ENCODE measurements at regions of chr16 and their contacts with region 1.

Region 1: DNA sequence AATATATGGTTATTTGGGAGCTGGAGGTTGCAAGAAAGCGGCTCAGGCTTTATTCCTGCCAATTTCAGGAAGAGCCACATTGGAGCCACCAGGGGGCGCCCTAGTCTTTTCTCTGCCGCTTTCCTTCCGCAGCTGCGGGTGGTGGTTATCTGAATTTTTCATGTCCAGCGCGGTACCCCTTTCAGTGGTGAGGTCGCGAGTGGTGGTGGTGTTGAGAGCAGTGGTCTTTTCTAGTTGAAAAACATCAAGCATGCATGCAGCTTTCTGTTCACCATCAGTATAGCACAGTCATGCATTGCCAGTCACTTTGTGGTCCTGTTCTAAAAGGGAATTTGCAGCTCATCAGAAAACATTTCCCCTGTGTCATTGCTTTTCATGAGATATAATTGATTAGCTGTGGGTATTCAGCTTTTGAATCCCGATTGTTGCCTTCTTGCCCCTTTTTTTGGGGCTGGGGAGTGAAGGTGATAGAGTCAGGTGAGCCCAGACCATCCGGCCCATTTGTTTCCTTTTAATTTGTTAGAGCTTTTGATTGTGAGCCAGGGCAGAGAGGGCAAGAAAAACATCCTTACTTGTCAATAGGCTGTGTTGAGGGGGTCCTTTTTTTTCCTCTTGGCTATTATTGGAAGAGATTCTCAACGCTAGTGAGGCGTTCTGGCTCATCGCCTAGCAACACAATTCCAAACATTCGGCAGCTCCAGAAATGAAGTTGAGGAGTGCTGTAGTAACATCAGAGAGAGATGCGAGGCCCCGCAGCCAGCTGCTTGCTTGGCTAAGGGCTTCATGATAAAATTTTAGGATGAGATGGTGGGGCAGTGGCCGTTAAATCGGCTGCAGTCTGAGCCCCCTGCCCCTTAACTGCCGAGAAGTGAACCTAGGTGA is 119.0 kb downstream of the SNX29 start:
- DNase-seq: peak; percentile 76
- H3K4me3 ChIP-seq: peak overlapping the region in 1 of 2 experiments; percentile 42; a peak in 1 of 4 replicates
- H3K27ac ChIP-seq: no peak overlapping the region
- H3K4me1 ChIP-seq: peaks cover 3 to 14% of the 10 kb centered on the region in 2 experiments; a peak in 2 of 4 replicates
- H3K27me3 ChIP-seq: no peaks in the 10 kb centered on the region
- CTCF ChIP-seq: peak; percentile 97
- EP300 ChIP-seq: no peak
- RAD21 ChIP-seq: peak; percentile 84

Region 2: DNA sequence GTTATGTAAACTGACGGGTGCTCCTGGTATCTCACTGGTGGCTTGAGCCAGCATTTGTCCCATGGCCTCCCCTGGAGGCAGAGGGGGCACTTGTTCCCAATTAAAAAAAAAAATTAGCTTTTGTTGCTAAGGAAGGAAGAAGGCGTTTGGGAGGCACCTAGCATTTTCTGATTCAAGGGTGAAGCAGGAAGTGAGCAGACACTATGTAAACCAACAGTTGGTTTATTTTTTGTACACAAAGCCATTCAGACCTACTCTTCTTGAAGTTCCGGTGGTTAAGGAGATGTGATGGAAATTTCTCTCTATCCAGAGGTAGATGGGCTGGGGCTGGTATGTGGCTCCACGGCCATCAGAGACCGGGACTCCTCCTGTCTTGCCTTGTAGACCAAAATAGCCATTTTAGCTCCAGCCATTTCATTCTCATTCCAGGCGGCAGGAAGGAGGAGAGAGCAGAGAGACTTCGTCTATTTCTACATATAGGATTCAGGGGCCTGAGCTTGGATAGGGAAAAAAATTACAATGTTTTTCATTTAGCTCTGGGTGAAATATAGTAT is 16.0 kb before region 1 on chr16:
- CTCF ChIA-PET with region 1: interaction called, 34 read pairs
- POLR2A ChIA-PET with region 1: no interaction called
- DNase-seq: no peak
- H3K4me3 ChIP-seq: no peak overlapping the region
- H3K27ac ChIP-seq: no peak overlapping the region
- H3K4me1 ChIP-seq: no peaks in the 10 kb centered on the region
- H3K27me3 ChIP-seq: no peaks in the 10 kb centered on the region
- CTCF ChIP-seq: no peak
- EP300 ChIP-seq: no peak
- RAD21 ChIP-seq: no peak

Region 3: DNA sequence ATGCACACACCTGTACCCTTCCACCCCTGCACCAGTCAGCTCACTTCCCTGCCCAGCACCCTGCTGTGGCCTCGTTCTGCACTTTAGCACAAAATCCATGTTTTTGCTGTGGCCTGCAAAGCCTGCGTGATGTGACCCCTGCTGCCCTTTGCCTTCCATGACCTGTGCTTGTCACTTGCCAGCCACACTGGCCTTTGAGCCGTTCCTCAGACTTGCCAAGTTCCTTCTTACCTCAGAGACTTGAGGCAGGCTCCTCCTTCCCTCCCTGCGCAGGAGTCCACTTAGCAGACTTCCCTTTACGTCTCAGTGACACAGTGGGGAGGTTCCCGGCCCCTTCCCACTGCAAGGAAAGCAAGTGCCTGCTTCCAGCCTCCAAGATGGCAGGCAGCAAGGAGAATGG is 15.7 kb after region 1 on chr16:
- CTCF ChIA-PET with region 1: interaction called, 81 read pairs
- POLR2A ChIA-PET with region 1: no interaction called
- DNase-seq: no peak
- H3K4me3 ChIP-seq: no peak overlapping the region
- H3K27ac ChIP-seq: no peak overlapping the region
- H3K4me1 ChIP-seq: peaks cover 0 to 17% of the 10 kb centered on the region in 2 experiments; a peak in 1 of 4 replicates
- H3K27me3 ChIP-seq: no peaks in the 10 kb centered on the region
- CTCF ChIP-seq: no peak
- EP300 ChIP-seq: no peak
- RAD21 ChIP-seq: no peak

Region 4: GRCh38 chr16:12215277-12216105 is 120.0 kb after region 1 on chr16:
- CTCF ChIA-PET with region 1: interaction called, 12 read pairs
- POLR2A ChIA-PET with region 1: no interaction called
- DNase-seq: peak; percentile 41
- H3K4me3 ChIP-seq: no peak overlapping the region
- H3K27ac ChIP-seq: no peak overlapping the region
- H3K4me1 ChIP-seq: no peaks in the 10 kb centered on the region
- H3K27me3 ChIP-seq: no peaks in the 10 kb centered on the region
- CTCF ChIP-seq: peak; percentile 37
- EP300 ChIP-seq: no peak
- RAD21 ChIP-seq: peak; percentile 43

Region 5: DNA sequence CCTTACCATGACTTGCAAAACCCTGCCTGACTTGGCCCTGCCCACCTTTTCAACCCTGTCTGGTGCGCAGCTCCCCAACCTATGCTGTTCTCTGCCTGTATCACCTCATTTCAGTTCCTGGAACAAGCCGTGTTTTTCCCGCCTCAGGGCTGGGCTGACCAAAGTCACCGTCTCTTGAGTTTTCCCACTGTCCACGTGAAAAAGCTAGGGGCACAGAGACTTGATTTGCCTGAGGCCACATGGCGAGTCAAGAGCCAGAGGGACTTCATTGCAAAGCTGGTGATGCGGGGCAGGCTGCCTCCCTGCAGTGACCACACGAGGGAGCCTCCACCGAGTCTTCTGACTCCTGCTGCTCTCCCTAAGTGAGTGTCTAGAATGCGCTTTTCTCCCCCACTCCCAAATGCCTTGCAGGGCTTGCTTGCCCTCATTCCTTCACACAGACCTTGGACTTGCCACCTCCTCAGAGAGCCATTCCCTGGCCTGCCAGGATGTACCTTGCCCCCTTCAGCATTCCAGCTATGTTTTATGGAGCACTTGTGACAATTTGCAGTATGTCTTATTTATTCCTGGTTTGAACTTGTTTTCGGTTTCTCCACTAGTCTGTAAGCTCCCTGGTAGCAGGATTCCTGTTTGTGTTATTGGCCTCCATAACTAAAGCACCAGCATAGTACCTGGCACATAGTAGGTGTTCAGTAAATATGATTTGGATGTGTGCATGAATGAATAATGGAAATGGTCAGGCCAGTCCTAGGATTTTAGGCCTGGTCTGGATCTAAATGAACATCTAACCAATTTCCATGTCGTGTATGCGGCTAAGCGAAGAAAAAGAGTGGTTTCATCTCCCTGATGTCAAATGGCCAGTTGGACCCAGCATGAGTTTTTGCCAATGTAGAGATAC is 133.3 kb after region 1 on chr16:
- CTCF ChIA-PET with region 1: interaction called, 15 read pairs
- POLR2A ChIA-PET with region 1: no interaction called
- DNase-seq: peak; percentile 63
- H3K4me3 ChIP-seq: no peak overlapping the region; a peak in 1 of 4 replicates
- H3K27ac ChIP-seq: peak overlapping the region; percentile 8 to 44; a peak in 1 of 4 replicates
- H3K4me1 ChIP-seq: peaks cover 8% of the 10 kb centered on the region in 2 experiments; a peak in 2 of 4 replicates
- H3K27me3 ChIP-seq: no peaks in the 10 kb centered on the region
- CTCF ChIP-seq: peak; percentile 66
- EP300 ChIP-seq: no peak
- RAD21 ChIP-seq: peak; percentile 58

Region 6: GRCh38 chr16:12907670-12908233 is 812.2 kb after region 1 on chr16:
- CTCF ChIA-PET with region 1: interaction called, 10 read pairs
- POLR2A ChIA-PET with region 1: no interaction called
- DNase-seq: peak; percentile 38
- H3K4me3 ChIP-seq: no peak overlapping the region
- H3K27ac ChIP-seq: no peak overlapping the region
- H3K4me1 ChIP-seq: no peaks in the 10 kb centered on the region
- H3K27me3 ChIP-seq: peaks cover 18% of the 10 kb centered on the region
- CTCF ChIP-seq: peak; percentile 53
- EP300 ChIP-seq: no peak
- RAD21 ChIP-seq: peak; percentile 64

Region 7: GRCh38 chr16:13453938-13454553 is 1358.5 kb after region 1 on chr16:
- CTCF ChIA-PET with region 1: interaction called, 22 read pairs
- POLR2A ChIA-PET with region 1: no interaction called
- DNase-seq: peak; percentile 33
- H3K4me3 ChIP-seq: peak overlapping the region in 1 of 2 experiments; percentile 17; a peak in 1 of 4 replicates
- H3K27ac ChIP-seq: no peak overlapping the region
- H3K4me1 ChIP-seq: no peaks in the 10 kb centered on the region; a peak in 1 of 4 replicates
- H3K27me3 ChIP-seq: no peaks in the 10 kb centered on the region
- CTCF ChIP-seq: peak; percentile 61
- EP300 ChIP-seq: no peak
- RAD21 ChIP-seq: peak; percentile 64